MCF 10A (cell line): ENCODE measurements at regions of chr5 and their contacts with region 1.

Region 1: DNA sequence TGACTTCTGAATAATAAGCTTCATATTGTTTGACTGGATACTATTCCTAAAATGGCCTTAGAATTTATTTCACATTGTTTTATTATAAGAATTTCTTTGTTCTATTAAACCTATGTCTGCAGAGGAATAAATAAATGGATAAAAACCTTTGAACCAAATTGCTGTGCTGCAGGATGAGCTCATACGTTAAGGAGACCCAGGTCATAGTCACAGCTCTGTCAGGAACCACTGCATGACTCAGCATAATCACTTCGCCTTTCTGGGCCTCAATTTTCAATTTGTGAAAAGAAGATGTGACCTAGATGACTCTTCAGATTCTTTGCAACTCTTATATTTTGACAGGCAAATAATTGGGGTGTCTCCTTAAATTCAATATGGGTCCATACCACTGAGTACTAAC is 36.7 kb upstream of the HMHB1 start:
- DNase-seq: peak; percentile 35
- H3K4me3 Mint-ChIP-seq: no peak overlapping the region
- H3K27ac Mint-ChIP-seq: no peak overlapping the region
- H3K4me1 Mint-ChIP-seq: no peaks in the 10 kb centered on the region
- H3K27me3 Mint-ChIP-seq: no peaks in the 10 kb centered on the region
- CTCF ChIP-seq: no peak

Region 2: DNA sequence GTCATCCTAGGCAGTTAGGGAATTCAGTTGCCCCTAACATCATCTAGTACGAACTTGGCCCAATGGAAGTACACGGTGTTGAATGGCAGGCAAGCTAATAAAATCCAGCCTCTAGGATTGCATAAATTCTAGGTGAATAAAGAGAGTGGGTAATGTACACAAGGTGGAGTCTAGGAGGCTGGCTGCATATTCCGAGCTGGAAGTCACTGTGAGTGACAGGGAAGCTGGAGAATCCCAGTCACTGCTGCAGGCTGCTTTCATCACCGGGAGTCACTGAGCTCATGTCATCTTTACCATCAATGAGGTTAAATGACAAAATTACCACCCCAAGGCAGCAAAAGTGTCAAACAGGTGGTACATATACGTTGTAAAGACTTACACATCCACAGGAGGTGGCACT is 54.6 kb before region 1 on chr5:
- CTCF ChIA-PET with region 1: no interaction called
- POLR2A ChIA-PET with region 1: no interaction called
- intact Hi-C with region 1: no loop called
- DNase-seq: no peak
- H3K4me3 Mint-ChIP-seq: no peak overlapping the region
- H3K27ac Mint-ChIP-seq: no peak overlapping the region
- H3K4me1 Mint-ChIP-seq: peaks cover 9% of the 10 kb centered on the region
- H3K27me3 Mint-ChIP-seq: no peaks in the 10 kb centered on the region
- CTCF ChIP-seq: no peak

Region 3: DNA sequence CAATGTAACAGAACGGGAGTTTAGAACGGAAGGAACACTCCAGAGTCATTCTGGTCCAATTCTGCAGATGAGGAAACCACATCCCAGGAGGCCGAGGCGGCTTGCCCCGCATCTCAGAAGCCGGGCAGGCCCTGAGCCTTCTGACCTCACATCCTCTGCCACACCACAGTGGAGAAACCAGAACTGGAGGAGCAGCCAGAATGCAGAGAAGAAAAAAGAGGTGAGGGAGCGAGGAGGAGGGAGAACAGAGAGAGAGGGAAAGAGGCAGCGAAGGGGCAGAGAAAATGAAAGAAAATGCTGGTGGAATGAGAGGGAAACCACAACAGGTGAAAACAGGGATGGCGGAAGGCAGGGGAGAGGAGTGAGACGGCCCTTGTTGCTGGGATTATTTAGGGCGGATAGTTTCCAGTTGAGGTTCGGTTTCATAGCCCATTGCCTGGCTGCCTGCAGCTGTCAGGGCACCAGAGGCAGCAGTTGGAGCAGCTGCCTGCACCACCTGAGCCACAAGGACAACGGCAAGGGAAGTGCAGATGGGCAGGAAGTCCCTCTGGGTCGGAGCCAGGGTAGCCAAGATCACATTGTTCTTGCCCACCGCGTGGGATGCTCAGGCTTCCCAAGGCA is 36.9 kb after region 1 on chr5 and contains the start of gene HMHB1:
- CTCF ChIA-PET with region 1: no interaction called
- POLR2A ChIA-PET with region 1: no interaction called
- intact Hi-C with region 1: loop called (anchors 2 kb)
- DNase-seq: no peak
- H3K4me3 Mint-ChIP-seq: no peak within 1 kb of the TSS
- H3K27ac Mint-ChIP-seq: no peak within 1 kb of the TSS
- H3K4me1 Mint-ChIP-seq: no peaks in the 10 kb centered on the region
- H3K27me3 Mint-ChIP-seq: no peaks in the 10 kb centered on the region
- CTCF ChIP-seq: no peak
- total RNA-seq, gene HMHB1: not detected in 2 replicates